ENCODE measurements at regions of chr3 and their contacts with region 1.

Region 1: DNA sequence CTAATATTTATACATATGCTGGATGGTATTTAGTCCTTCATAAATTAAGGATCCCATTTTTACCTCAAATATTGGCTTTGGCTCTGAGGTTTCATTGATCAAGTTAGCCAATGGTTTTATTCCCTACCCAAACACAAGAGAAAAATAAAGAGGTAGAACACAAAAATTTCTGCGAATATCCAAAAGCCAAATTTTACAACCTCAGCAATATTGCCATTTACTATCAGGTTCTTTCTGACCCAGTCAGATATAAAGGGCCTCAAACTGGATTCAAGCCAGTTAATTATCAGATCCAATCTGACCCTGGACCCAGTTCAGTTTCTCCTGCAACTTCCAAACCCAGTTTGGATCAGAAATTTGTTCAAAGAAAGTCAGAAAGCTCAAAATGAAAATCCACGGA is 998.1 kb downstream of the SI start:
- DNase-seq: no peak
- H3K4me3 ChIP-seq: no peak overlapping the region
- H3K27ac ChIP-seq: no peak overlapping the region
- H3K4me1 ChIP-seq: no peaks in the 10 kb centered on the region
- H3K27me3 ChIP-seq: no peaks in the 10 kb centered on the region
- CTCF ChIP-seq: no peak
- EP300 ChIP-seq: no peak
- POLR2A ChIP-seq: no peak

Region 2: DNA sequence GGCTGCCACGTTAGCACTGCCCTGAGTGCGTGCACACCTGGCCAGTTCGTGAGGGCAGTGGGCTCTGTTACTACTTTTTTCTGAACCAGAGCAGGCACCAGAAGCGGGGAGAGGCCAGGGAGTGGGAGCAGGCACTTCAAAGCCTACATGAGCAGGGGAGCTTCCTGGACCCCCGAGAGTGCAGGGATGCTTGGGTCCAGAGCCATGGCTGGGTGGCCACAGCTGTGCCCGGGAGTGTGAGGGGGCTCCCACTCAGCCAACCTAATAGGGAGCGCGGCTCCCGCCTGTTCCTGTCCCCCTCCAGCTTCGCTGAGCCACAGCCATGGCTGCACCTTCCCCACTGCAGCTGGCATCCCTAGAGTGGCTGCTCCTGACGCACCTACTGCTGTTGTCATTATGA is 425.2 kb before region 1 on chr3:
- in situ Hi-C with region 1: no loop called
- intact Hi-C with region 1: no loop called
- DNase-seq: no peak
- H3K4me3 ChIP-seq: no peak overlapping the region
- H3K27ac ChIP-seq: no peak overlapping the region
- H3K4me1 ChIP-seq: no peaks in the 10 kb centered on the region
- H3K27me3 ChIP-seq: no peaks in the 10 kb centered on the region
- CTCF ChIP-seq: no peak
- EP300 ChIP-seq: no peak
- POLR2A ChIP-seq: no peak

Region 3: GRCh38 chr3:164194869-164195268 is 114.7 kb after region 1 on chr3:
- in situ Hi-C with region 1: no loop called
- intact Hi-C with region 1: no loop called
- DNase-seq: no peak
- H3K4me3 ChIP-seq: no peak overlapping the region
- H3K27ac ChIP-seq: no peak overlapping the region
- H3K4me1 ChIP-seq: no peaks in the 10 kb centered on the region
- H3K27me3 ChIP-seq: no peaks in the 10 kb centered on the region
- CTCF ChIP-seq: no peak
- EP300 ChIP-seq: no peak
- POLR2A ChIP-seq: no peak

Region 4: GRCh38 chr3:165148876-165149441 is 1068.8 kb after region 1 on chr3:
- in situ Hi-C with region 1: no loop called
- intact Hi-C with region 1: loop called (anchors 5 kb)
- DNase-seq: no peak
- H3K4me3 ChIP-seq: no peak overlapping the region
- H3K27ac ChIP-seq: peak overlapping the region; percentile 41 to 78 (median 64)
- H3K4me1 ChIP-seq: peaks cover 0 to 27% (median 13%) of the 10 kb centered on the region in 4 donors
- H3K27me3 ChIP-seq: no peaks in the 10 kb centered on the region
- CTCF ChIP-seq: no peak
- EP300 ChIP-seq: no peak
- POLR2A ChIP-seq: no peak